ENCODE measurements at regions of chr3 and their contacts with region 1.

Region 1: GRCh38 chr3:196192036-196192523 is 19.1 kb downstream of the ZDHHC19 start:
- DNase-seq: peak; percentile 72
- ATAC-seq: peak; percentile 40
- H3K4me3 Mint-ChIP-seq: peak overlapping the region; percentile 45
- H3K27ac Mint-ChIP-seq: peak overlapping the region; percentile 97
- H3K4me1 Mint-ChIP-seq: peaks cover 54% of the 10 kb centered on the region
- H3K27me3 Mint-ChIP-seq: no peaks in the 10 kb centered on the region

Region 2: DNA sequence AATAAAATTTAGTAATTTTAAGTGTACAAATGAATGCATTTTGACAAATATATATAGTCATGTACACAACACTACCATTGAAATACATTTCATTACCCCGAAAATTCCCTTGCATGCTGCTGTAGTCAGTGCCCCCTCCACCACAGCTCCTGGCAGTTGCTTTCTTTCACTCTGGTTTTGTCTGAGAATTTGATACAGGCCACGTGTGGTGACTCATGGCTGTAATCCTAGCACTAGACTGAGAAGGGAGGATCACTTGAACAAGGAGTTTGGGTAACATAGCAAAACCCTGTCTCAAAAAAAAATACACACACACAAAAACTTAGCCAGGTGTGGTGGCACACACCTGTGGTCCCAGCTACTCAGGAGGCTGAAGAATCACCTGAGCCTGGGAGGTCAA is 175.6 kb before region 1 on chr3:
- CTCF ChIA-PET with region 1: interaction called, 13 read pairs
- DNase-seq: no peak
- ATAC-seq: no peak
- H3K4me3 Mint-ChIP-seq: no peak overlapping the region
- H3K27ac Mint-ChIP-seq: no peak overlapping the region
- H3K4me1 Mint-ChIP-seq: peaks cover 4% of the 10 kb centered on the region
- H3K27me3 Mint-ChIP-seq: peaks cover 25% of the 10 kb centered on the region

Region 3: GRCh38 chr3:196159952-196160804 is 31.9 kb before region 1 on chr3:
- CTCF ChIA-PET with region 1: no interaction called
- DNase-seq: peak; percentile 64
- ATAC-seq: peak; percentile 76
- H3K4me3 Mint-ChIP-seq: no peak overlapping the region
- H3K27ac Mint-ChIP-seq: peak overlapping the region; percentile 68
- H3K4me1 Mint-ChIP-seq: peaks cover 29% of the 10 kb centered on the region
- H3K27me3 Mint-ChIP-seq: no peaks in the 10 kb centered on the region

Region 4: DNA sequence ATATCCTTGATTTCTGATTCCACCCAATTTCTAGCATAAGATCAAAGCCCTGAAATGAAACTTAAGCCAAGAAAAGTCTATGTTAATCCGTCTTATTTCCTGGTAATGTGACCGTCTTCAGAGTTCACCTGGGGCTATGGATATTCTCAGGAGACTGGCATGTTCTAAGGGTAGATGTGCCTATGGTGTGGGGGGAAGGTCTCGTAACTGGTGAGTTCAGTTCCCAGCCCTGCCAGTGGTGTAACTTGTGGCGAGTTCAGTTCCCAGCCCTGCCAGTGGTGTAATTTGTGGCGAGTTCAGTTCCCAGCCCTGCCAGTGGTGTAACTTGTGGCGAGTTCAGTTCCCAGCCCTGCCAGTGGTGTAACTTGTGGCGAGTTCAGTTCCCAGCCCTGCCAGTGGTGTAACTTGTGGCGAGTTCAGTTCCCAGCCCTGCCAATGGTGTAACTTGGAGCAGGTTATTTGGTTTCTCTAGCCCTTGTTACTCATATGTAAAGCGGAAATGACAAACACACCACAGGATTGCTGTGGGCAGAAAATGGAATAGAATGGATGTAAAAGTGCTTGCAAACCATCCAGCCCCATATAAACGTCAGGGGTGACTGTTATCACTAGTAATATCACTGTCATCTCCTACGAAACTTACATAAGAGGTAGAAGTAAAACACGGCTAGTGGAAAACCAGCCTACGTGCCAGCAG is 54.7 kb after region 1 on chr3:
- CTCF ChIA-PET with region 1: no interaction called
- DNase-seq: no peak
- ATAC-seq: no peak
- H3K4me3 Mint-ChIP-seq: no peak overlapping the region
- H3K27ac Mint-ChIP-seq: no peak overlapping the region
- H3K4me1 Mint-ChIP-seq: peaks cover 10% of the 10 kb centered on the region
- H3K27me3 Mint-ChIP-seq: no peaks in the 10 kb centered on the region

Region 5: GRCh38 chr3:196336319-196337145 is 144.5 kb after region 1 on chr3:
- CTCF ChIA-PET with region 1: no interaction called
- DNase-seq: no peak
- ATAC-seq: no peak
- H3K4me3 Mint-ChIP-seq: no peak overlapping the region
- H3K27ac Mint-ChIP-seq: no peak overlapping the region
- H3K4me1 Mint-ChIP-seq: no peaks in the 10 kb centered on the region
- H3K27me3 Mint-ChIP-seq: peaks cover 7% of the 10 kb centered on the region

Measured in activated CD8-positive, alpha-beta memory T cell treated with anti-CD3 and anti-CD28 coated beads, Interleukin-2, amount 10 ng/mL, durations not matched to agents 7 days and 5 days (primary cell).